ENCODE measurements at regions of chr6 and their contacts with region 1.

Region 1: DNA sequence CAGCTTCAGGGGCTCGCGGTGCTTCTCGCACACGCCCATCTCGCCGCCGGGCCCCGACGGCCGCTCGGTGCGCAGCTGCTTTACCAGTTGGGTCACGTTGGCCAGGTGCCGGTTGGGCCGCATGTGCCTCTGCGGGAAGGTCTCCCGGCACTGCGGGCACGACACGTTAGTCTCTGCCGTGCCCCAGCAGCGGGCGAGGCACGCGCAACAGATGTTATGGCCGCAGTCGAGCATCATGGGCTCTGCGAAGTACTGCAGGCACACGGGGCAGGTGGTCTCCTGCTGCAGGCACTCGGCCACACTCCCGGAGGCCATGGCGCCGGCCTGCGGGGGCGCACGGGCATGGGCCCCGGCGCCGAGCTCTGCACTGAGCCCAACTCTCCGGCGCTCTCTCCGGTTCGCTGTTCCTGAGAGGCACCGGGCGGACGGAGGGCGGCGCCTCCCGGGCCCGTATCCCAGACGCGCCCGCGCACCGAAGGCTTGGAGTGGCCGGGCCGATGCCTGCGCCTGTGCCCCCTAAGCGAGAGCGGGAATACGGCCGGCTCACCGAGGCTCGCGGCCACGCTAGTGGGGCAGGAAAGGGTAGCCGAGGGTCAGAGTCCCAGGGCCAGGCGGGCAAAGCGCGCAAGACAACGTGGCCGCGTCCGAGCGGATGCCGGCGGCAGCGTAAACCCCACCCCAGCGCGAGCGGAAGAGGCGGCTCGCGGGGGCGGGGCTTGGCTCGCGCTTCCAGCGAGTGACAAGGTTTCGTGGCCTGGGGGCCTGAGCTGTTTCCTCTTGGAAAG is at the start of gene TRIM27:
- DNase-seq: peak; percentile 80
- H3K4me3 Mint-ChIP-seq: peak within 1 kb of the TSS; percentile 93
- H3K27ac Mint-ChIP-seq: peak within 1 kb of the TSS; percentile 91
- H3K4me1 Mint-ChIP-seq: peaks cover 33% of the 10 kb centered on the region
- H3K27me3 Mint-ChIP-seq: no peaks in the 10 kb centered on the region
- total RNA-seq, gene TRIM27: 67.2 and 67.4 TPM in 2 replicates

Region 2: GRCh38 chr6:28729501-28730402 is 193.8 kb before region 1 on chr6:
- intact Hi-C with region 1: no loop called
- DNase-seq: no peak
- H3K4me3 Mint-ChIP-seq: peak overlapping the region; percentile 86
- H3K27ac Mint-ChIP-seq: peak overlapping the region; percentile 76
- H3K4me1 Mint-ChIP-seq: peaks cover 22% of the 10 kb centered on the region
- H3K27me3 Mint-ChIP-seq: peaks cover 73% of the 10 kb centered on the region

Region 3: DNA sequence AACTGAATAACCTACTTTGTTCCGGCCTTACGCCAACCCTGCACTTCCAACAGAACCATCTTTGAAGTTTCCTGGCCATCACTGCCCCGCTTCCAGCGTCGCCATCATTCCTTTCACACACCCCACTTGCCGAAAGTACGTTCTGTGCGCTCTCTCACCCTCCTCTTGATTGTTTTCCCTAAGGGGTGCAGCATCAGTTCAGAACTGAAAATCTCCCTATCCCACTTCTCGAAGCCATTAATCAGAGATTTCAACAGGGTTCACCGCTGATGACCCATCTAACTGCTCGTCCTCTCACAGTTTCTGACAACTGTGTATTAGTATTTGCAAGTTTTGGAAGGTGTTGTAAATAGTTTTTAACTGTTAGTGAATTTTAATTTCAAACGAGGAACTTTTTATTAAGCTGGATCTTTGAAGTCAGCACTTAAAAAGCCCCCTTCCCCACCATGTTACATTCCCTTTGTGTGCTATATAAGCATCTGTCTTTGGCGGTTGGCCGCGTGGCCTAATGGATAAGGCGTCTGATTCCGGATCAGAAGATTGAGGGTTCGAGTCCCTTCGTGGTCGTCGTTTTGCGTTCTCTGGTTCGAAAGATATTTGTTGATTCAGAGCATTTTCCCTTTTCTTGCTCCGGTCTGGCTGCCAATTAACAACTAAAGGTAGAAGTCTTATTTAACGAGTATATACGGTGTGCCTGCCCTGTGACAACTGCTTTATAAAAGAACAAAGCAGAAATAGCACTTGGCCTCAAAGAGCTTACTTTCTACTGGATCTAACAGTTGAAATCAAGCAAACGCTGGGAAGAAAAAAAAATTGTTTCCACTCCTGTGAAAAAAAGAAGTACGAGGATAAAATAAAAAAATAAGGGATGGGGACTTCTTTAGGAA is 42.4 kb before region 1 on chr6:
- intact Hi-C with region 1: loop called (anchors 1 kb)
- DNase-seq: peak; percentile 30
- H3K4me3 Mint-ChIP-seq: peak overlapping the region; percentile 76
- H3K27ac Mint-ChIP-seq: peak overlapping the region; percentile 81
- H3K4me1 Mint-ChIP-seq: peaks cover 34% of the 10 kb centered on the region
- H3K27me3 Mint-ChIP-seq: peaks cover 36% of the 10 kb centered on the region

Region 4: GRCh38 chr6:28895134-28895812 is 28.2 kb before region 1 on chr6:
- intact Hi-C with region 1: loop called (anchors 1 kb)
- DNase-seq: peak; percentile 89
- H3K4me3 Mint-ChIP-seq: peak overlapping the region; percentile 90
- H3K27ac Mint-ChIP-seq: peak overlapping the region; percentile 100
- H3K4me1 Mint-ChIP-seq: peaks cover 25% of the 10 kb centered on the region
- H3K27me3 Mint-ChIP-seq: peaks cover 6% of the 10 kb centered on the region

Region 5: GRCh38 chr6:28988536-28989311 is 65.2 kb after region 1 on chr6:
- intact Hi-C with region 1: no loop called
- DNase-seq: peak; percentile 52
- H3K4me3 Mint-ChIP-seq: peak overlapping the region; percentile 82
- H3K27ac Mint-ChIP-seq: peak overlapping the region; percentile 34
- H3K4me1 Mint-ChIP-seq: peaks cover 31% of the 10 kb centered on the region
- H3K27me3 Mint-ChIP-seq: peaks cover 28% of the 10 kb centered on the region

Measured in activated T-helper 1 cell treated with anti-CD3 and anti-CD28 coated beads, Interleukin-12 subunit alpha, Interleukin-12 subunit beta, Interleukin-2, Interleukin-4 antibody, amounts not matched to agents 30 ng/mL and 10 ng/mL and 1 ng/mL, durations not matched to agents 14 hours and 24 hours and 36 hours (primary cell).